ENCODE measurements at regions of chr9 and their contacts with region 1.

Region 1: DNA sequence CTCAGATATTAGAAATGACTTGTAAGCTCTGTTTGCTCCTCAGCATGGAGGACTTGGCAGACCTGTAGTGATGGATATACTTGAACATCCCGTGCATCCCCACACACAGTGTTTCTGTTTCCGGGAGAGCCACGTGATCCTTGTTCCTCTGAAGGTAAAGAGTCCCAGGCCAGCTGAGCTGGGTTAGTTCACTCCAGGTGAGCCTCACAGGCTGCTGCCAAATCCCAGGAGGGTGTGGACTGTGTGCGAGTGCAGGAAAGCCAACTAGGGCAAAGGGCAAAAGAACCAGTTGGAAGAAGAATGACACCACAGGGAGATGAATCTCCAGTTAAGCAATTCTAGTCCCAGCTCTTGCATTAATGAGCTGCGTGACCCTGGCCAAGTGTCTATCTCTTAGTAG is 10.4 kb upstream of the TOMM5 start:
- DNase-seq: no peak
- ATAC-seq: peak; percentile 19
- H3K4me3 ChIP-seq: no peak overlapping the region
- H3K27ac ChIP-seq: no peak overlapping the region
- H3K4me1 ChIP-seq: no peaks in the 10 kb centered on the region
- H3K27me3 ChIP-seq: peaks cover 0 to 3% of the 10 kb centered on the region in 2 donors

Region 2: GRCh38 chr9:37163299-37163698 is 439.5 kb before region 1 on chr9:
- intact Hi-C with region 1: no loop called
- DNase-seq: no peak
- ATAC-seq: no peak
- H3K4me3 ChIP-seq: no peak overlapping the region
- H3K27ac ChIP-seq: no peak overlapping the region
- H3K4me1 ChIP-seq: no peaks in the 10 kb centered on the region
- H3K27me3 ChIP-seq: no peaks in the 10 kb centered on the region

Region 3: DNA sequence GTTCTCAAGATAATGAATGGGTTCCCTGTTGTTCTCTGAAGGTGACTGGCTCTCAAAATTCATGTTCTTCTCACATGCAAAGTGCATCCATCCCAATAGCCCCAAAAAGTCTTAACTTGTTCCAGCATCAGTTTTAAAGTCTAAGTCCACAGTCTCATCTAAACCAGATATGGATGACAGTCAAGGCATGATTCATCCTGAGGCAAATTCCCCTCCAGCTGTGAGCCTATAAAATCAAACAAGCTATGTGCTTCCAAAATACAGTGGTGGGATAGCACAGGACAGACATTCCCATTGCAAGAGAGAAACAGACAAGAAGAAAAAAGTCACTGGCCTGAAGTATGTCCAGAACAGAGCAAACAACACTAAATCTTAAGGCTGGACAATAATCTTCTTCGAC is 52.0 kb before region 1 on chr9:
- intact Hi-C with region 1: loop called in 1 of 2 experiments (anchors 10 kb)
- DNase-seq: no peak
- ATAC-seq: no peak
- H3K4me3 ChIP-seq: no peak overlapping the region
- H3K27ac ChIP-seq: no peak overlapping the region
- H3K4me1 ChIP-seq: no peaks in the 10 kb centered on the region
- H3K27me3 ChIP-seq: no peaks in the 10 kb centered on the region

Region 4: GRCh38 chr9:37626708-37627293 is 24.0 kb after region 1 on chr9:
- intact Hi-C with region 1: no loop called
- DNase-seq: no peak
- ATAC-seq: no peak
- H3K4me3 ChIP-seq: no peak overlapping the region
- H3K27ac ChIP-seq: no peak overlapping the region
- H3K4me1 ChIP-seq: no peaks in the 10 kb centered on the region
- H3K27me3 ChIP-seq: no peaks in the 10 kb centered on the region

Measured in aorta (tissue), 5 donors.